ENCODE measurements at regions of chr17 and their contacts with region 1.

Region 1: DNA sequence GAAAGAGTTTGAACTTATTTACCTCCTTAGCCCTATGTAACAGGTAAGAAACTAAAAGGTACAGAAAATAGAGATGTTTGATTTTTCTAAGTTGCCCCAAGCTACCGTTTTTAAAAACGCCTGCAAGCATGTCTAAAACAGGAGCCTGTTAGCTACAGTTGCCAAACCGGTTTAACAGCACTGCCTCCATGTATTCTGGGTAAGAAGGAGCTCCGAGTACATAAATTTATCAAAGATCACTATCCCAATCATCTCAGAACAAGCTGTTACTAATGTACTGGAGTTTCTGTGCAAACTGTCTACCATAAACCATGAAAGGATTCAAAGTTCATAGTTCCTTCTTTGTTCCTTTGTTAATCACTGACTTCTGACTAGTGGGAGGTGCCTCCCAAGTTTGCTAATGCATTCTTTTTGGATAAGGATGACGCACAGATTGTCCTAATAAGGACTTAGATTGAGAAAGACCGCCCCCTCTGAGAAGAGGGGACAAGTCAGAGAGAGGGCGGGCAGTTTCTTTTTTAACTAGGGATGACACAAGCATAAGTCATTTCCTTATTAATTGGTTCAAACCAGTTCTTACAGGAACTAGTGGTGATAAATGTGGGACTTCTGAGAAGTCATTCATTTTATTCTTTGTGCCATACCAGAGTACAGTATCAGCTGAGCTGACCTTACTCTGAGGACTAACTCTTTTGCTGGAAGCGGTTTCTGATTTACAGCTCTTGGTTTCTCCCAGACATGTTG is 55.3 kb downstream of the TUBD1 start:
- DNase-seq: peak; percentile 72 to 97 (median 79)
- ATAC-seq: peak; percentile 80
- H3K4me3 ChIP-seq: peak overlapping the region; percentile 96
- H3K27ac ChIP-seq: peak overlapping the region; percentile 99
- H3K4me1 ChIP-seq: peaks cover 2 to 29% of the 10 kb centered on the region in 2 experiments; a peak in 3 of 5 replicates
- H3K27me3 ChIP-seq: no peaks in the 10 kb centered on the region
- CTCF ChIP-seq: 0 out of 6 replicates have a peak, but pooled peaks of 1 of the 3 experiments have one; percentile 0
- EP300 ChIP-seq: peak; percentile 92
- POLR2A ChIP-seq: peak; percentile 99
- RAD21 ChIP-seq: no peak

Region 2: GRCh38 chr17:59702304-59702703 is 135.2 kb before region 1 on chr17:
- CTCF ChIA-PET with region 1: no interaction called
- POLR2A ChIA-PET with region 1: interaction called, 12 read pairs
- in situ Hi-C with region 1: no loop called
- intact Hi-C with region 1: loop called (anchors 5 kb)
- DNase-seq: peak; percentile 54 to 90 (median 68)
- ATAC-seq: peak; percentile 45
- H3K4me3 ChIP-seq: peak overlapping the region; percentile 13; the same call in 1 of the 2 replicates
- H3K27ac ChIP-seq: peak overlapping the region; percentile 62
- H3K4me1 ChIP-seq: peaks cover 16 to 47% of the 10 kb centered on the region in 2 experiments; a peak in 3 of 5 replicates
- H3K27me3 ChIP-seq: no peaks in the 10 kb centered on the region
- CTCF ChIP-seq: no peak
- EP300 ChIP-seq: peak; percentile 80
- POLR2A ChIP-seq: no peak
- RAD21 ChIP-seq: no peak

Region 3: DNA sequence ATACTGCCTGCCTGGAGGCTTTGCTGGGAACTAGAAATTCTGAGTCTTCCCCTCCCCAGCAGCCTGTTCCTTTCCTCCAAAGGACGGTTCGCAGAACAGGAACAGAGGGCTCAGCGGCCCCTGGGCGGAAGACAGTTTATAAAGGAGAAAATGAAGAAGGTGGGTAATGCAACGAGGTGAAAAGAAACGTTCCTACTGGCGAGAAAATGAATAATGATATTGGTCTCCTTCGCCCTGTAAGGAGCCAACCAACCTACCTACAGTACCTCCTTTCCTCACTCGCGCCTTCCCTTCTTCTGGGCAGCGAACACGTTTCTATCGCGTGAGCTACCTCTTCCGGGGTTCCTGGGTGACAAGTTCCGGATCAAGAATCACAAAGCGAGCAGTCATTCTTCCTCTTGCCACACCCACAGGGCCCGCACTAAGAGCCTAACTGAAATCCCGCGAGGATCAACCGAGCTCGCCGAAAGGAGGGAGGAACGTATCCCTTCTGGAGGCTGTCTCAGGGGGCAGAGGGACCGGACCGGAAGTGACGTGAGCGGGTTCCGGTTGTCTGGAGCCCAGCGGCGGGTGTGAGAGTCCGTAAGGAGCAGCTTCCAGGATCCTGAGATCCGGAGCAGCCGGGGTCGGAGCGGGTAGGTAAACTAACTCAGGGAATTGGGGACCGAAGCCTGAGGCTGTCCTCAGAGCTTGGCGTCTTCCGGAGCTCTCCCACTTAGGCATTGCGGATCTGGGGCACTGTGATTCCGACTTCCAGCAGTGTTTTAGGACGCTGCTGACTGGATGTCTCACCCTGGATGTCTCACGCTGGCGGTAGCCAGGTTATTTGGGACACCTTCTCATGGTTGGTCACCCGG is 130.1 kb before region 1 on chr17 and contains the starts of genes PTRH2 and VMP1:
- CTCF ChIA-PET with region 1: no interaction called
- POLR2A ChIA-PET with region 1: interaction called, 12 read pairs
- in situ Hi-C with region 1: no loop called
- intact Hi-C with region 1: loop called (anchors 5 kb)
- DNase-seq: peak; percentile 94 to 99 (median 96)
- ATAC-seq: peak; percentile 93
- H3K4me3 ChIP-seq: peak within 1 kb of the TSS; percentile 92
- H3K27ac ChIP-seq: peak within 1 kb of the TSS; percentile 99
- H3K4me1 ChIP-seq: peaks cover 13 to 16% of the 10 kb centered on the region in 2 experiments; a peak in 3 of 5 replicates
- H3K27me3 ChIP-seq: no peaks in the 10 kb centered on the region
- CTCF ChIP-seq: 0 out of 6 replicates have a peak, but pooled peaks of 1 of the 3 experiments have one; percentile 9
- EP300 ChIP-seq: no peak; the same call in none of the 2 replicates
- POLR2A ChIP-seq: peak; percentile 99
- RAD21 ChIP-seq: no peak
- polyA plus RNA-seq, gene PTRH2: 195 to 210 TPM
- polyA plus RNA-seq, gene VMP1: 245 to 272 TPM

Region 4: DNA sequence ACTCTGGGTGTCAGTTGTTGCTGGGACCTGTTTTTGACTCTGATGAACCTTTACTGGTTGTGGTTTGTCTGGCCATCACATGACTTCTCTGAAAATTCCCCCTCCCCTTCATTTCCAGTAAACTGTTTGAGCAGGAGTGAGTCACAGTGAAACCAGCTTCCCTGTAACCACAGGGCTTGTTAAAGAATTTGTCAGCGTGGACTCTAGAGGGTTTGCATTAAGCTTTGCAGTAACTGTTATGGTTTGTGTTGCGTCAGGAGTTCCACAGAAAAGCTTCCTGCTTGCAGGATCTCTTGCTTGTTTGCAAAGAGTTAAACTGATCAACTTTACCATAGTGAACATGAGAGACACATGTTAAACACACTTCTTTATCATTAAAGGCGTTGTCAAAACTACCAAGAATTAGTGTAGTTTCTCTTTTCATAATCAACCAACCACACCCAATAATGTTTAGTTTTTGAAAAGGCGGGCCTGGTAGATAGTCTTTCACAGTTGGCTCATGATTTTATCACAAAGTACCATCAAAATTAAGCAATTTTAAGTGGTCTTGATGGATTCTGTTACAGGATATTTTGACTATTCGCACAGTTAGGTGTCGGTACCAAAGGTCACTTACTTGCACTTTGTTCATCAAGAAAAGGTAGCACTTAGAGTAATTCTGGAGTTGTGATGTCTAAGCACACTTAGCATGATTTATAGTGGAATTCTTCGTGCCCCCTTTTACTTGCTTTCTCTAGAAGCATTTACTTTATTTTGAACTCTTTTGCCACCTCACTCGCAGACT is 50.8 kb before region 1 on chr17:
- CTCF ChIA-PET with region 1: no interaction called
- POLR2A ChIA-PET with region 1: interaction called, 44 read pairs
- in situ Hi-C with region 1: loop called (anchors 5 kb)
- intact Hi-C with region 1: loop called (anchors 1 kb)
- DNase-seq: peak; percentile 70 to 96 (median 78)
- ATAC-seq: peak; percentile 89
- H3K4me3 ChIP-seq: peak overlapping the region; percentile 20; the same call in 1 of the 2 replicates
- H3K27ac ChIP-seq: peak overlapping the region; percentile 92
- H3K4me1 ChIP-seq: peaks cover 35 to 45% of the 10 kb centered on the region in 2 experiments
- H3K27me3 ChIP-seq: no peaks in the 10 kb centered on the region
- CTCF ChIP-seq: peak in 1 of 3 experiments; percentile 29; a peak in 2 of 6 replicates
- EP300 ChIP-seq: peak; percentile 89
- POLR2A ChIP-seq: peak; percentile 72
- RAD21 ChIP-seq: peak; percentile 12 to 43; a peak in 2 of 4 replicates

Region 5: GRCh38 chr17:59804901-59805465 is 32.5 kb before region 1 on chr17:
- CTCF ChIA-PET with region 1: no interaction called
- POLR2A ChIA-PET with region 1: interaction called, 9 read pairs
- in situ Hi-C with region 1: no loop called
- intact Hi-C with region 1: loop called (anchors 2 kb)
- DNase-seq: peak in 2 of 4 experiments; percentile 31 to 63
- ATAC-seq: peak; percentile 72
- H3K4me3 ChIP-seq: 0 out of 2 replicates have a peak overlapping the region, but pooled peaks have one; percentile 5
- H3K27ac ChIP-seq: peak overlapping the region; percentile 94
- H3K4me1 ChIP-seq: peaks cover 0 to 8% of the 10 kb centered on the region in 2 experiments; a peak in 4 of 5 replicates
- H3K27me3 ChIP-seq: no peaks in the 10 kb centered on the region
- CTCF ChIP-seq: no peak
- EP300 ChIP-seq: no peak
- POLR2A ChIP-seq: no peak
- RAD21 ChIP-seq: no peak

Region 6: GRCh38 chr17:59914274-59914854 is 76.9 kb after region 1 on chr17:
- CTCF ChIA-PET with region 1: no interaction called
- POLR2A ChIA-PET with region 1: no interaction called
- in situ Hi-C with region 1: no loop called
- intact Hi-C with region 1: no loop called
- DNase-seq: peak; percentile 47 to 55 (median 50)
- ATAC-seq: peak; percentile 70
- H3K4me3 ChIP-seq: no peak overlapping the region
- H3K27ac ChIP-seq: no peak overlapping the region
- H3K4me1 ChIP-seq: no peaks in the 10 kb centered on the region
- H3K27me3 ChIP-seq: no peaks in the 10 kb centered on the region
- CTCF ChIP-seq: peak in 2 of 3 experiments; percentile 43 to 73; a peak in 4 of 6 replicates
- EP300 ChIP-seq: no peak
- POLR2A ChIP-seq: no peak
- RAD21 ChIP-seq: peak; percentile 62 to 70